ENCODE measurements at regions of chr14 and their contacts with region 1.

Region 1: GRCh38 chr14:21092273-21093011 is 6.0 kb downstream of the ZNF219 start:
- DNase-seq: peak; percentile 86 to 90 (median 87)
- ATAC-seq: peak; percentile 94 to 98 (median 96)
- H3K4me3 ChIP-seq: no peak overlapping the region
- H3K27ac ChIP-seq: no peak overlapping the region
- H3K4me1 ChIP-seq: no peaks in the 10 kb centered on the region
- H3K27me3 ChIP-seq: no peaks in the 10 kb centered on the region
- CTCF ChIP-seq: peak; percentile 100
- POLR2A ChIP-seq: no peak

Region 2: GRCh38 chr14:20970983-20971704 is 121.3 kb before region 1 on chr14:
- intact Hi-C with region 1: no loop called
- DNase-seq: peak; percentile 85 to 89 (median 87)
- ATAC-seq: peak; percentile 97 to 99 (median 98)
- H3K4me3 ChIP-seq: peak overlapping the region; percentile 55 to 70 (median 66)
- H3K27ac ChIP-seq: peak overlapping the region; percentile 47 to 55 (median 54)
- H3K4me1 ChIP-seq: peaks cover 0 to 12% (median 2%) of the 10 kb centered on the region in 4 donors
- H3K27me3 ChIP-seq: no peaks in the 10 kb centered on the region
- CTCF ChIP-seq: peak; percentile 72 to 86 (median 77)
- POLR2A ChIP-seq: no peak

Region 3: GRCh38 chr14:21014761-21015190 is 77.7 kb before region 1 on chr14:
- intact Hi-C with region 1: loop called (anchors 5 to 10 kb)
- DNase-seq: peak; percentile 72 to 86 (median 73)
- ATAC-seq: peak; percentile 90 to 96 (median 94)
- H3K4me3 ChIP-seq: no peak overlapping the region
- H3K27ac ChIP-seq: no peak overlapping the region
- H3K4me1 ChIP-seq: peaks cover 0 to 9% (median 0%) of the 10 kb centered on the region in 4 donors
- H3K27me3 ChIP-seq: no peaks in the 10 kb centered on the region
- CTCF ChIP-seq: peak; percentile 90 to 97 (median 94)
- POLR2A ChIP-seq: no peak